Colonic mucosa (tissue), 4 donors: ENCODE measurements at regions of chr2 and their contacts with region 1.

Region 1: DNA sequence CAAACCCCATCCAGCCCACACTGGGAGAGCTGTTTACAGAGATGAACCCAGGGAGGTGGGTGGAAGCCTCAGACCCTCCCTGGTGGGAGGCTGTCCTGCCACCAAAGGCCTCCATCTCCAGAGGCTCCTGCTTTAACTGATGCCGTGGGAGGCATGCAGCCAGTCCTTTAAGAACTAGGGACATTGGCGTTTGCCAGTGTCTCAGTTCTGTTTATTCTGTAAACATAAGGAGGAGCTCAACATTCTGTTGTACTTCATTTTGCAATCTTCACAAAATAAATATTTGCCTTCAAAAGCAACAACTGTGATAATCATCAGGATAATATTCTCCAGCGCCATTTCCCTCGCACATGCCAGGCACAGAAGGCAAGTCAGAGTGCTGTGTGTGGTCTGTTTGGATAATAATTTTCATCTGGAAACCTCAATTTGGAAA is 6.7 kb downstream of the EDAR start:
- DNase-seq: no peak
- H3K4me3 ChIP-seq: no peak overlapping the region
- H3K27ac ChIP-seq: peak overlapping the region; percentile 13
- H3K4me1 ChIP-seq: peaks cover 3% of the 10 kb centered on the region
- H3K27me3 ChIP-seq: no peaks in the 10 kb centered on the region
- CTCF ChIP-seq: no peak

Region 2: GRCh38 chr2:108944601-108945331 is 37.5 kb before region 1 on chr2:
- intact Hi-C with region 1: loop called (anchors 5 kb)
- DNase-seq: no peak
- H3K4me3 ChIP-seq: no peak overlapping the region
- H3K27ac ChIP-seq: no peak overlapping the region
- H3K4me1 ChIP-seq: no peaks in the 10 kb centered on the region
- H3K27me3 ChIP-seq: no peaks in the 10 kb centered on the region
- CTCF ChIP-seq: no peak